GM12878 (cell line): ENCODE measurements at regions of chr3 and their contacts with region 1.

Region 1: GRCh38 chr3:69914395-69914794 is 85.1 kb upstream of the SAMMSON start:
- DNase-seq: no peak
- ATAC-seq: no peak
- H3K4me3 ChIP-seq: no peak overlapping the region
- H3K27ac ChIP-seq: no peak overlapping the region
- H3K4me1 ChIP-seq: no peaks in the 10 kb centered on the region
- H3K27me3 ChIP-seq: no peaks in the 10 kb centered on the region; a peak in 1 of 4 replicates
- CTCF ChIP-seq: no peak
- EP300 ChIP-seq: no peak
- POLR2A ChIP-seq: no peak
- RAD21 ChIP-seq: no peak

Region 2: GRCh38 chr3:69542221-69543079 is 371.9 kb before region 1 on chr3:
- CTCF ChIA-PET with region 1: no interaction called
- POLR2A ChIA-PET with region 1: no interaction called
- RAD21 ChIA-PET with region 1: no interaction called
- SMC1A ChIA-PET with region 1: no interaction called
- in situ Hi-C with region 1: no loop called
- intact Hi-C with region 1: no loop called
- DNase-seq: no peak
- ATAC-seq: no peak
- H3K4me3 ChIP-seq: no peak overlapping the region
- H3K27ac ChIP-seq: no peak overlapping the region
- H3K4me1 ChIP-seq: no peaks in the 10 kb centered on the region
- H3K27me3 ChIP-seq: peaks cover 0 to 5% of the 10 kb centered on the region in 2 experiments; a peak in 3 of 4 replicates
- CTCF ChIP-seq: no peak
- EP300 ChIP-seq: no peak
- POLR2A ChIP-seq: no peak
- RAD21 ChIP-seq: no peak

Region 3: GRCh38 chr3:69986419-69986818 is 72.0 kb after region 1 on chr3:
- CTCF ChIA-PET with region 1: no interaction called
- POLR2A ChIA-PET with region 1: no interaction called
- RAD21 ChIA-PET with region 1: no interaction called
- SMC1A ChIA-PET with region 1: no interaction called
- in situ Hi-C with region 1: no loop called
- intact Hi-C with region 1: loop called (anchors 2 kb)
- DNase-seq: no peak
- ATAC-seq: no peak
- H3K4me3 ChIP-seq: no peak overlapping the region
- H3K27ac ChIP-seq: no peak overlapping the region
- H3K4me1 ChIP-seq: no peaks in the 10 kb centered on the region
- H3K27me3 ChIP-seq: no peaks in the 10 kb centered on the region
- CTCF ChIP-seq: no peak
- EP300 ChIP-seq: no peak
- POLR2A ChIP-seq: no peak
- RAD21 ChIP-seq: no peak

Region 4: GRCh38 chr3:71006810-71007785 is 1092.7 kb after region 1 on chr3:
- CTCF ChIA-PET with region 1: no interaction called
- POLR2A ChIA-PET with region 1: no interaction called
- RAD21 ChIA-PET with region 1: no interaction called
- SMC1A ChIA-PET with region 1: no interaction called
- in situ Hi-C with region 1: no loop called
- intact Hi-C with region 1: no loop called
- DNase-seq: no peak
- ATAC-seq: peak; percentile 48; the same call in 2 of the 3 replicates
- H3K4me3 ChIP-seq: no peak overlapping the region
- H3K27ac ChIP-seq: no peak overlapping the region
- H3K4me1 ChIP-seq: peaks cover 3% of the 10 kb centered on the region; the same call in 1 of the 2 replicates
- H3K27me3 ChIP-seq: no peaks in the 10 kb centered on the region
- CTCF ChIP-seq: peak; percentile 47 to 56 (median 47); a peak in 5 of 6 replicates
- EP300 ChIP-seq: no peak
- POLR2A ChIP-seq: no peak
- RAD21 ChIP-seq: peak; percentile 85

Region 5: GRCh38 chr3:71846185-71846584 is 1931.8 kb after region 1 on chr3:
- CTCF ChIA-PET with region 1: no interaction called
- POLR2A ChIA-PET with region 1: no interaction called
- RAD21 ChIA-PET with region 1: no interaction called
- SMC1A ChIA-PET with region 1: no interaction called
- in situ Hi-C with region 1: no loop called
- intact Hi-C with region 1: no loop called
- DNase-seq: no peak
- ATAC-seq: no peak
- H3K4me3 ChIP-seq: no peak overlapping the region
- H3K27ac ChIP-seq: no peak overlapping the region
- H3K4me1 ChIP-seq: no peaks in the 10 kb centered on the region
- H3K27me3 ChIP-seq: peaks cover 0 to 1% of the 10 kb centered on the region in 2 experiments; a peak in 2 of 4 replicates
- CTCF ChIP-seq: no peak
- EP300 ChIP-seq: no peak
- POLR2A ChIP-seq: no peak
- RAD21 ChIP-seq: no peak